CD8-positive, alpha-beta T cell (primary cell): ENCODE measurements at regions of chr10 and their contacts with region 1.

Region 1: DNA sequence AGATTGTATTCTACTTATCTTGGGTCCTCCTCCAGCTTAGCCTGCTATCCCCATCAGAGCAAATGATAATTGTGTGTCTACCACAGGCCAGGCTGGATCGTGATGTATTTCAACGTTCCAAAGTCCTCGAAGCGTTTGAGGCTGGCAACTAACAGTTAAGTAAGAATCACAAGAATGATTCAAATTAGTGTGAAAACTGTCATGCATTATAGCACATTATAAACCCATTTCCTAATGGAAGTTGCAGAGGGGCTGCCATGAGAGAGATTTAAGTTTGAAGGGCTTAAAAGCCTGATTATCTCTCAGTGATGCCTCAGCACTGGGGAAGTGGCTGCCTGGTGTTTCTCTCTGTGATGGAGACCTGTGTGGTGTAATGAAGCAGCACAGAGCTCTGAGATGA is 119.1 kb downstream of the FRMD4A start:
- DNase-seq: no peak
- ATAC-seq: no peak
- H3K4me3 ChIP-seq: no peak overlapping the region
- H3K4me3 Mint-ChIP-seq: no peak overlapping the region
- H3K27ac ChIP-seq: no peak overlapping the region
- H3K27ac Mint-ChIP-seq: no peak overlapping the region
- H3K4me1 ChIP-seq: no peaks in the 10 kb centered on the region
- H3K4me1 Mint-ChIP-seq: no peaks in the 10 kb centered on the region
- H3K27me3 ChIP-seq: no peaks in the 10 kb centered on the region
- H3K27me3 Mint-ChIP-seq: peaks cover 10% of the 10 kb centered on the region
- CTCF ChIP-seq: no peak

Region 2: DNA sequence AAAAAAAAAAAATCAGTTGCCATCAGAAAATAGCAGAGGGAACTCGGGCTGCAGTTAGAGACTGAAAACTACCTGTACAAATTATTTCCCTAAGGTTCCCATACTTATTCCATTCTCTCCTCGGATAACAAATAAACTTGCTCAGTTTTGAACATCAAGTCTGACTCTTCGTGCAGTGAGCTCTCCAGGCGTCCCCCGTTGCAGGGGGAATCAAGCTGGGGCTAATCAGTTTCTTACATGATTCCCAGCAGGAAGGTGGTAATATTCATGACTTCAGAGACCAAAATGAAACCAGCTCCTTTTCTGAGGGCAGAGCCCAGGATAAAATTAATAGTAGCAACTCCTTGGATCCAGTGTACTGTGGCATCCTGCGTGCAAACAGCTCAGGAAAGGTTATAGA is 16.2 kb before region 1 on chr10:
- CTCF ChIA-PET with region 1: interaction called, 11 read pairs
- POLR2A ChIA-PET with region 1: no interaction called
- intact Hi-C with region 1: no loop called
- DNase-seq: no peak
- ATAC-seq: no peak
- H3K4me3 ChIP-seq: no peak overlapping the region
- H3K4me3 Mint-ChIP-seq: no peak overlapping the region
- H3K27ac ChIP-seq: no peak overlapping the region
- H3K27ac Mint-ChIP-seq: no peak overlapping the region
- H3K4me1 ChIP-seq: no peaks in the 10 kb centered on the region
- H3K4me1 Mint-ChIP-seq: no peaks in the 10 kb centered on the region
- H3K27me3 ChIP-seq: peaks cover 2 to 3% of the 10 kb centered on the region in 2 experiments
- H3K27me3 Mint-ChIP-seq: peaks cover 36% of the 10 kb centered on the region
- CTCF ChIP-seq: no peak

Region 3: DNA sequence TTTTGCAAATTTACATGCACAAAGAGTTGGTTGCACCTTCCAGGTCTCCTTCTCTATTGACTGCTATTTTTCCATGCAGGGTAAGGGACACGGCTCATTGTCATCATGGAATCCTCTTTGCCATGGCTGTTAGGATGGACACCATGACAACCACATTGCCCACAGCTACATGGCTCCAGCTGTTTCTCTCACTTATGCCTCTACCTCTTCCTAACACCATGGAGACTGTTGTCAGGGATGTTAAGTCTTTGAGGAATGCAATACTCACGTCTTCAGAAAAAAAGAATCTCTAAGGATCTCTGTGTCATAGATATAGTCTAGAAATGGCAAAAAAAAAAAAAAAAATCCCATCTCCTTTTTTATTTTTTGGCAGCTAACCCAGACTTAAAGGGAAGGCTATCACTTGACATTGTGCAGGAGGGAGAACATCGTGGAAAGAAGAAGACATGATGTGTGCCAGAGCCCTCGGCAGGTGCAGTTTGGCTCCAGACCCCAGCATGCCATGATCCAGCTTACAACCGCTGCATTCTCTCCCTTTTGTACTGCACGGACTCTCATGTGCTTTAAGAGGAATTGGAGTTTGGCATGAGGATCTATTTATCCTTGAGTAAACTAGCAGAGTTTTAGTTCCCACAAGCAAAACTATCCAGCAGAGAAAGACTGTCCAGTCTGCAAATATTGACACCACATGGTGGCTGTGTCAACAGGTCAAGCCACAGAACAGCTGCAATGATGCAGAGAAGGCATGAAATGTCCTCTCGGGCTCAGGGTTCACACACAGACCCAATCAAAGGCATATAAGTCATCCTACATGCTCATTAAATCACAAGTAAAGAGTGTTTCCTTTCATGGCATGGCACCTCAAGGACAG is 48.3 kb after region 1 on chr10:
- CTCF ChIA-PET with region 1: no interaction called
- POLR2A ChIA-PET with region 1: no interaction called
- intact Hi-C with region 1: no loop called
- DNase-seq: no peak
- ATAC-seq: no peak
- H3K4me3 ChIP-seq: no peak overlapping the region
- H3K4me3 Mint-ChIP-seq: no peak overlapping the region
- H3K27ac ChIP-seq: no peak overlapping the region
- H3K27ac Mint-ChIP-seq: no peak overlapping the region
- H3K4me1 ChIP-seq: no peaks in the 10 kb centered on the region
- H3K4me1 Mint-ChIP-seq: no peaks in the 10 kb centered on the region
- H3K27me3 ChIP-seq: peaks cover 0 to 2% of the 10 kb centered on the region in 2 experiments
- H3K27me3 Mint-ChIP-seq: peaks cover 19% of the 10 kb centered on the region
- CTCF ChIP-seq: no peak